ENCODE measurements at regions of chr13 and their contacts with region 1.

Region 1: DNA sequence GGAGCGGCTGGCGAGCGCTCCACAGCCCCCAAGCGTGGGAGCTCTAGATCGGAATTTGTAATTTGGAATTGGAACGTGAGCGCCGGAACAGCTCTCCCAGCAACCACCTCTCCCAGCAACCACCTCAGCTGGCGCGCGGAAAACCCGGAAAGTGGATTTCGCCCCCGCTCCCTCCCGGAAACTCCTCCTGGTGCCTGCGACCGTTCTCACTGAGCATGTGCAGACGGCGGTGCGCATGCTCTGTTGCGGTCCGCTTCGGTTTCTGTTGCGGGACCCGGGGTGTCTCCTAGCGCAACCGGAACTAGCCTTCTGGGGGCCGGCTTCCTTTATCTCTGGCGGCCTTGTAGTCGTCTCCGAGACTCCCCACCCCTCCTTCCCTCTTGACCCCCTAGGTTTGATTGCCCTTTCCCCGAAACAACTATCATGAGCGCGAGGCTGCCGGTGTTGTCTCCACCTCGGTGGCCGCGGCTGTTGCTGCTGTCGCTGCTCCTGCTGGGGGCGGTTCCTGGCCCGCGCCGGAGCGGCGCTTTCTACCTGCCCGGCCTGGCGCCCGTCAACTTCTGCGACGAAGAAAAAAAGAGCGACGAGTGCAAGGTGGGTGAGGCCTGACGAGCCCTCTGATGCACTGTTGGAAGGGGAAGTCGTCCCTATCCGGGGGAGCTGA is at the start of gene TM9SF2:
- DNase-seq: peak; percentile 97
- ATAC-seq: peak; percentile 89
- total RNA-seq, gene TM9SF2: 61.1 TPM

Region 2: DNA sequence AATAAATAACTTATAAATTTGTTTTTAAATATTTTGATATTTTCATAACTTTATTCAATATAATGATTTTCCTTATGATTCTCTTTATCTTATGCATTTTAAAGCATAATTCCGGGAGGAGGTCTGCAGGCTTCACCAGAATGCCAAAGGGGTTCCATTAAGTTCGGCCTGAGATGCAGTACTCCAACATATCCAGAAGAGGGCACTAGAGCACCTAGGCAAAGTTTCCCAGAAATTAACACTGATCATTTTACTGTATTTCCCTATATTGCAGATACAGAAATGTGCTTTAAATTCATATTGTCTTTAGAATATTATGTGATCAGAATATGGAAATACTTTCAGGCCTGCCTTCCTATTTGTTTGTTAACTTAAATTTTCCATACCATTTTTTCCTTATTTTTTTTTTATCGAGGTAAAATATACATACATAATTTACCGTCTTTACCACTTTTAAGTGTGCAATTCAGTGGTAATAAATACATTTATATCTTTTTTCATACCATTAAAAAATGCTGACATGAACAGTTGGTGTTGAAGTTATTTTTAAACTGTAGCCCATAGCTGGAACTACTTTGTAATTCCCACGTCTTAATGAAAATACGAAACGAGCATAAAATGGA is 58.9 kb before region 1 on chr13:
- intact Hi-C with region 1: loop called (anchors 5 kb)
- DNase-seq: no peak
- ATAC-seq: no peak

Region 3: DNA sequence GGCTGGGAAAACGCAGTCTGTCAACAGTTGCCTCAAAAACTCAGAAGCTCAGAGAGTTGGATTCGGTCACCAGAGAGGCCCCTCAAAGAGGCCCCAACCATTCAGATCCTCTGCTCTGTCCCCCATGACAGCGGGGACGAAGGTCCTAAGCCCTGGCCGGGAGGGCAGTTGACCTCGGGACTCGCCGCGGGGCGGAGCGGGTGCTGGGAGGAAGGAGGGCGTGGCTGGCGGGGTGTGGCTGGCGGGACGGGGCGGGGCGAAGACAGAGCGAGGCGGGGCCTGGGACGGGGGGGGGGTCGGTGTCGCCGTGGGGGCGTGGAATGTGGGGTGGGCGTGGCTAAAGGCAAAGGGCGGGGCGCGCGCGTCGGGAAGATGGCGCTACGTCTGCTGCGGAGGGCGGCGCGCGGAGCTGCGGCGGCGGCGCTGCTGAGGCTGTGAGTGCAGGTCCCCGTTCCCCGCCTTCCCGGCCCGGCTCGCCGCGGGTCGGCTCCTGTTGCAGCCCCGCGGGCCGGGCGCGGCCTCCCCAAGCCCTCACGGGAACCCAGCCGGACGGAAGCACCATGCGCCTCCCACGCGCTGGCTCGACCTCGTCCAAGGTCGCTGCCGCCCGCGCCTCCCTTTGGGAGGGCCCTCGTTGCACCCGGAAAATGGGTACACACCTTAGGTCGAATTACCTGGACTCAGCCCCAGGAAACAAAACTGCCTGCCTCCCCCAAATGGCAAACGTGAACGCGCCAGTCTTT is 105.2 kb after region 1 on chr13:
- intact Hi-C with region 1: loop called (anchors 5 kb)
- DNase-seq: peak; percentile 96
- ATAC-seq: peak; percentile 97

Region 4: DNA sequence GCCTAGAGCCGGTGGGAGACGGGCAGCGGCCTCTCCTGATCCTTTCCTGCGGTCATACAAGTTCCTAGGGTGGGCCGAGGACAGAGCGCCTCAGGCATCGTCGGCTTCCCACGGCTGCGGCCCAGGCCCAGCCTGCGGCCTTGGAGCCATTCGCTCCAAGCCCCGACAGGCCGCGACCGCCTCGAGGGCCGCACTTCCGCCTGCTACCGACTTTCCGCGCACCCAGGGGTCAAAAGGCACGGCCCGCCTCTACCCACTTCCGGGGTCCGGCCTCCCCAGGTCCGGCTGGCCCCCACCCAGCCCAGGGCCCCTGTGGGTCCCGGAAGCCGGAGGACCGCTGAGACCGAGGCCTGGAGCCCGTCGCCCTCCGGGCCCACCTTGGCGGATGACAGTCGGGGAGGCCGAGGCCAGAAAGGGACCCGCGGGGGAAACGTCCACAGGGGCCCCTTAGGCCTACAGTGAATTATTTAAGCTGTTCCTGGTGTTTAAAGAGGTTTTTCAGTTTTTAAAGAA is 496.4 kb after region 1 on chr13:
- intact Hi-C with region 1: no loop called
- DNase-seq: no peak
- ATAC-seq: no peak